Ovary (tissue), 10 donors: ENCODE measurements at regions of chr1 and their contacts with region 1.

Region 1: DNA sequence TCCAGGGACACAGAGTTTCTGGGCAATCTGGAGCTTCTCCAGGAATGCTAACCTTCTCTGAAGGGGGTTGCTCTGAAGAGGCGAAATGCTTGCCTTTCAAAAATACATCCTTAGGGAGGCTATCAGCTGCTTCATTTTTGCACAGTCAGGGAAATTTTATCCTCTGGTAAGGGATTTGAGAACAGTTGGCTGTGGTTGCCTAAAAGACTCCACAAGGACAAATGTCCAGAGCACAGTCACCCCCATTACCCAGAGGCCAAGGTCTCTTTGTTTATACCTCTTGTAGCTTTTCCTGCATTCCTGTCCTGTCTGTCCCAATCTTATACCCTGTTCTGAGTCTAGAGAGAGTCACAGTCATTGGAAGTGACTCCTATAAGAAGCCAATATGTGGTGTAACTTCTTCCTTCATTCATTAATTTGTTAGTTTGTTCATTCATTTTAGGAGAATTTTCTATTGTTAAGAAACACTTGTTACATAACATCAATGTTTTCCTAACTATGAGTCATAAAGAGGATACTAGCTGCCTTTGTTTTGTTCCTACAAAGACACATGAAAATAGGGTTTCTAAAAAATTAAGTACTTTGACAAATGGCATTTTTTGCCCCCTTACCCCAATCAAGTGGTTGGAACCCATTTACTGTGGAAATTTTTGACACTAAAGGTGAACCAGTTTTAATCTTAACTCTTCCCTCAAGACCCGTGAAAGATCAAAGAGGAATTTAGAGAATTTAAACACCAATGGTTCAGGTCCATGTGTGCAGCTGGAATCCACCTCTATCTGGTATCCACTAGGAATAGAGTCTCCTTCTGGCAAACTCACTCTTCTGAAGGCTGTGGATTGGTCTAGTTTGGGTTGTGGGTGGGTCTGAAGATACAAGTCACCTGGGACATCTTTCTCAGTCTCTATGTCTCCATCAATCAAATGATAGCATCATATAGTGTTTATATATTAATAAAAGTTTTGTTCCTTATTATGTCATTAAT is 47.1 kb downstream of the GPR88 start:
- DNase-seq: peak in 3 of 5 donors; percentile 19 to 52 (median 34)
- H3K4me3 ChIP-seq: no peak overlapping the region
- H3K27ac ChIP-seq: peak overlapping the region in 1 of 2 donors; percentile 28
- H3K4me1 ChIP-seq: peaks cover 12% of the 10 kb centered on the region
- H3K27me3 ChIP-seq: no peaks in the 10 kb centered on the region
- CTCF ChIP-seq: no peak
- EP300 ChIP-seq: no peak
- POLR2A ChIP-seq: no peak

Region 2: GRCh38 chr1:100502052-100502783 is 82.8 kb before region 1 on chr1:
- intact Hi-C with region 1: no loop called
- DNase-seq: no peak
- H3K4me3 ChIP-seq: no peak overlapping the region
- H3K27ac ChIP-seq: no peak overlapping the region
- H3K4me1 ChIP-seq: no peaks in the 10 kb centered on the region
- H3K27me3 ChIP-seq: no peaks in the 10 kb centered on the region
- CTCF ChIP-seq: no peak
- EP300 ChIP-seq: no peak
- POLR2A ChIP-seq: no peak

Region 3: DNA sequence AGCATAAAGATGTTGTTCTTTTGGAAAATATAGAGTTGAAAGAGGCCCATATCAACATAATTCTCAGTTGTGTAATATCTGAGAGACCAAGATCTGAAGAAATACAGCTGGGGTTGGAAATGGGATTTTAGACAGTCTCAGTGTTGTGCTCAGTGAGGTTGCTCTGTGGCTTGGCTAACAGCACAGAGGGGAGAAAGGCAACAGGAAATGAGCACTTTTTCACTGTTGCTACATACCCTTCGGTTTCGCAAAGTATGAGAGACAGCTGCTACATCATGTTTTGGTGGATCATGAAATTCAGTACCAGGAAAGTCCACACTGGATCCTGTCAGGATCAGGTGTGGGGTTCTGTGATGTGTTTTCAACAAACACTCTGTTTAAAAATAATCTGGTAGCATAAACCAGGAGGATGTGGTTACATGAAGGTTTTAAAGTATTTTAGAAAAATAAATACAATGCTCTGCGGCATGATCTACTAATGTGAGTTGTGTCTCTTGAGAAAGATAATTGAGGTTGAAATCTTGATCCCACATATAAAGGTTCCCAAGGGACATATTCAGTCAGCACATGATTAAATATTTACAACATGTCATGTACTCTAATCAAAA is 54.1 kb before region 1 on chr1:
- intact Hi-C with region 1: loop called in 1 of 4 experiments (anchors 10 kb)
- DNase-seq: peak in 2 of 5 donors; percentile 33 to 58
- H3K4me3 ChIP-seq: no peak overlapping the region
- H3K27ac ChIP-seq: peak overlapping the region in 1 of 2 donors; percentile 46
- H3K4me1 ChIP-seq: peaks cover 3% of the 10 kb centered on the region
- H3K27me3 ChIP-seq: no peaks in the 10 kb centered on the region
- CTCF ChIP-seq: no peak
- EP300 ChIP-seq: peak; percentile 9
- POLR2A ChIP-seq: no peak

Region 4: DNA sequence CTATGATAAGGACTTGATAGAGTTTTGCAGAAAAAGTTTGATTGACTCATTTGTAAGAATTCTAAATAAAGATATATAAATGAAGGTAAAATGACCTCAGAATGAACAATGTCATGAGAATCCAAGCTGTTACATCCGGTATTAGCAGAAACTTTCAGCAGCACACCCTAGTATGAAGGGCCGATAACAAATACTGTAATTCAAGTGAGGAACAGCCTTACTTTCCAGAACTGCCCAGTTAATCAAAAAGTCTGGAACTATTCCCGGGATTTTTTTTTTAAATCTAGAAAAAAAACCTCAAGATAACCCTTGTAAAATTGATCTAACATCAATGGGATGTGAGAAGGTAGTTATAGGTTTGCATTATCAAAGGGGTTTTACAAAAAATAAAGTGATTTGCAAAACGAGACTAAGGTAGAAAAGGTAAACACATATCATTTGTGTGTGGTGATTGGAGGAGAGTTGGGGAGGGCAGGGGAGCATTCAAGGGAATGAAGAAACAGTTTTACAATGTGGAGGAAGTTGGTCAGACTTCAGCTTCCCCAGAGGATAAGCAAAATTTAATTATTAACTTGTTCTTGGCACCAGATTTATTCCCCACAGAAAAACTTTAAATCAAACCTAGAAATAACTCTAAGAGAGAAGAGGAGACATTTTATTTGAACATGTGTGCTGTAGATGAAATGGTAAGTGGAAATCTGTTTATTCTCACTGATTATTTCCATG is 58.6 kb after region 1 on chr1:
- intact Hi-C with region 1: no loop called
- DNase-seq: no peak
- H3K4me3 ChIP-seq: no peak overlapping the region
- H3K27ac ChIP-seq: no peak overlapping the region
- H3K4me1 ChIP-seq: peaks cover 1% of the 10 kb centered on the region
- H3K27me3 ChIP-seq: no peaks in the 10 kb centered on the region
- CTCF ChIP-seq: no peak
- EP300 ChIP-seq: no peak
- POLR2A ChIP-seq: no peak